Transverse colon (tissue), 4 donors: ENCODE measurements at regions of chr5 and their contacts with region 1.

Region 1: DNA sequence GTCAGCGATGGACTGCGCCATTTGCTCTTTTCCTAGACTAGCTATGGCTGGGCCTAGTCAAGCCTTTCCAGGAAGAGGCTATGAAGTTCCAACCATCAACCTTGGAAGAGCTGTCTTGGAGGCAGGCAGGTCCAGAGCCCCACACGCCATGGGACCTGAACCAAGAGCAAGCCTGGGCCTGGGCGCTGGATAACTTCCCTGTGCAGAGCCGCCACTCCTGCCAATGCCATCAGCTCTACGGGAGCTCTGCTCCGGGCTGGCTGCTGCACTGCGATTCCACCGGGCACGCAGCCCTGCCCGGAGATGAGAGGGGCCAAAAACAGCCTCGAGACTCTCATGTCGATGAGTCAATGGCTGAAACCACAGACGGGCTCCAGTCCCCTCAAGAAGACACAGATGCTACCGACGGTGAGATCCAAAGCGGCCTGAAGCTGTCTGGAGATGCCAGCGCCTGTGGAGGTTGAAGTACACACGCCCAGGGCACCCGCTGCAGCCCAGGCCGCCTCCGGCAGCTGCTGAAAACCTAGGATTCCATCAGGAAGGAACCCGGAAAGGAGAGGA is 103.7 kb upstream of the SELENOP start:
- DNase-seq: no peak
- H3K4me3 ChIP-seq: no peak overlapping the region
- H3K27ac ChIP-seq: no peak overlapping the region
- H3K4me1 ChIP-seq: no peaks in the 10 kb centered on the region
- H3K27me3 ChIP-seq: no peaks in the 10 kb centered on the region
- CTCF ChIP-seq: no peak
- EP300 ChIP-seq: no peak
- POLR2A ChIP-seq: no peak

Region 2: DNA sequence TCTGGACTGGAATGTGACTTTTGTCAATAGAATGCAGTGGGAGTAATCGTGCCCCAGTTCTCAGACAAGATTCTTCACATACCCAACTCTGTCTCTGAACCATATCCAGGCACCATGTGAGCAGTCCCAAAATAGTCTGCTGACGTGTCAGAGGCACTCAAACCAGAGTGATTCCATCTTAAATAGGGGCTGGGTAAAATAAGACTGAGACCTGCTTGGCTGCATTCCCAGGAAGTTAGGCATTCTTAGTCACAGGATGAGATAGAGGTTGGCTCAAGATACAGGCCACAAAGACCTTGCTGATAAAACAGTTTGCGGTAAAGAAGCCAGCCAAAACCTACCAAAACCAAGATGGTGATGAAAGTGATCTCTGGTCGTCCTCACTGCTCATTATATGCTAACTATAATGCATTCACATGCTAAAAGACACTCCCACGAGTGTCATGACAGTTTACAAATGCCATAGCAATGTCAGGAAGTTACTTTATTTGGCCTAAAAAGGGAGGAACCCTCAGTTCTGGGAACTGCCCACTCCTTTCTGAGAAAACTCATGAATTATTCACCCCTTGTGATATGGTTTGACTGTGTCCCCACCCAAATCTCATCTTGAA is 1388.1 kb before region 1 on chr5:
- in situ Hi-C with region 1: no loop called
- intact Hi-C with region 1: loop called (anchors 5 kb)
- DNase-seq: no peak
- H3K4me3 ChIP-seq: no peak overlapping the region
- H3K27ac ChIP-seq: no peak overlapping the region
- H3K4me1 ChIP-seq: no peaks in the 10 kb centered on the region
- H3K27me3 ChIP-seq: no peaks in the 10 kb centered on the region
- CTCF ChIP-seq: no peak
- EP300 ChIP-seq: no peak
- POLR2A ChIP-seq: no peak

Region 3: GRCh38 chr5:43019614-43020293 is 104.4 kb after region 1 on chr5:
- in situ Hi-C with region 1: no loop called
- intact Hi-C with region 1: no loop called
- DNase-seq: peak; percentile 85
- H3K4me3 ChIP-seq: peak overlapping the region; percentile 22 to 61 (median 52)
- H3K27ac ChIP-seq: peak overlapping the region; percentile 92 to 97 (median 94)
- H3K4me1 ChIP-seq: peaks cover 0 to 27% (median 6%) of the 10 kb centered on the region in 4 donors
- H3K27me3 ChIP-seq: peaks cover 82% of the 10 kb centered on the region
- CTCF ChIP-seq: peak; percentile 51 to 73 (median 53)
- EP300 ChIP-seq: no peak
- POLR2A ChIP-seq: peak; percentile 58